ENCODE measurements at regions of chr1 and their contacts with region 1.

Region 1: GRCh38 chr1:211514030-211514754 is 22.2 kb upstream of the RD3 start:
- DNase-seq: peak; percentile 90
- H3K4me3 Mint-ChIP-seq: peak overlapping the region; percentile 23
- H3K27ac Mint-ChIP-seq: no peak overlapping the region
- H3K4me1 Mint-ChIP-seq: peaks cover 23% of the 10 kb centered on the region
- H3K27me3 Mint-ChIP-seq: no peaks in the 10 kb centered on the region

Region 2: GRCh38 chr1:210584439-210585113 is 929.6 kb before region 1 on chr1:
- CTCF ChIA-PET with region 1: interaction called, 6 read pairs
- intact Hi-C with region 1: loop called (anchors 2 kb)
- DNase-seq: peak; percentile 90
- H3K4me3 Mint-ChIP-seq: no peak overlapping the region
- H3K27ac Mint-ChIP-seq: no peak overlapping the region
- H3K4me1 Mint-ChIP-seq: peaks cover 3% of the 10 kb centered on the region
- H3K27me3 Mint-ChIP-seq: peaks cover 6% of the 10 kb centered on the region

Region 3: DNA sequence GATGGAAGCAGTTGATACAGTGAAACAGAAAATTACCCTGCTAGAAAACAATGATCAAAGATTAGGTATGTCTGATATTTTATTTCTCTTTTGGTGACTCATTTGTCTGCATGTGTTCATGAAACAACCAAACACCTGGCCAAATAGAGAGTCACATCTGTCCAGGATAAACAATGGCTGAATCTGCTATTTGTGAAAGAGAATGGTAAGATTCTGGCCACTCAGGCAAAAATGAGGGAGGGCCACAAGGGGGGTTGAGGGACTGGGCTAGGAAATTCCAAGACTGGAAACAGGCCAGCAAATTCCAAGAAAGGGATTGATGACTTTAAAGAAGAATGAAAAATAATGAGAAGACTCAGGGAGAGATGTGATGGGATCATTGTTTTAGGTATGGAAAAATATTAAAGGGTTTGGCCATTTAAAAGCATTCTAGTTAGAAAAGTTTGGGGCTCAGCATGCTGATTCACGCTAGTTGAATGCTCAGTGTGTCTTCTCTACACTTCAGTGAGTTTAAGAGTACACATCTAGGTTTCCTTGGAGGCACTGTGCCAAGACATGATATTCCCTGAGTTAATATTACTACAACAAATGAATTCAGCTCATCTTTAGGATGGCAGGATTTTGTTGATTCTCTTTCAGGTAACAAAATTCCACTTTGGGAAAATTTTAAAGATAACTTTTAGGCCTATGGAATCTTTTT is 142.6 kb before region 1 on chr1:
- CTCF ChIA-PET with region 1: no interaction called
- intact Hi-C with region 1: no loop called
- DNase-seq: no peak
- H3K4me3 Mint-ChIP-seq: no peak overlapping the region
- H3K27ac Mint-ChIP-seq: peak overlapping the region; percentile 48
- H3K4me1 Mint-ChIP-seq: peaks cover 2% of the 10 kb centered on the region
- H3K27me3 Mint-ChIP-seq: no peaks in the 10 kb centered on the region

Region 4: DNA sequence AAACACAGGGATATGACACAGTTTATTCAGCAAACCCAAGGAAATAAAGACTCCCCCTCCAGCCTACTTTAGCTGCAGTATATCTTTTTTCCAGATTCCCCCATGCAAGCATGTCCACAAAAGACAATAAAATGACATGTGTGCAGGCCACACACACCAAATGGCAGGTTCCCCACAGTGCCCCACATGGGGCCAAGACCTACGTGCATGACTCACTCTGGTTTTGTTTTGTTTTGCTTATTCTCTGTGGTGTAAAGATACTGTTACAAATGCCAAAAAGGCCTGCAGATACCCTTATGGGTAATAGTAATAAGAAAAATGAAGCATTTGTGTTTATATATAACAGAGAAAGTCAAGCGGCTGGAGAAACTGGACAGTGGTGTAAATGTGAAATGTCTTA is 93.8 kb before region 1 on chr1:
- CTCF ChIA-PET with region 1: interaction called, 4 read pairs
- intact Hi-C with region 1: loop called (anchors 1 kb)
- DNase-seq: peak; percentile 9
- H3K4me3 Mint-ChIP-seq: no peak overlapping the region
- H3K27ac Mint-ChIP-seq: no peak overlapping the region
- H3K4me1 Mint-ChIP-seq: peaks cover 16% of the 10 kb centered on the region
- H3K27me3 Mint-ChIP-seq: no peaks in the 10 kb centered on the region

Region 5: DNA sequence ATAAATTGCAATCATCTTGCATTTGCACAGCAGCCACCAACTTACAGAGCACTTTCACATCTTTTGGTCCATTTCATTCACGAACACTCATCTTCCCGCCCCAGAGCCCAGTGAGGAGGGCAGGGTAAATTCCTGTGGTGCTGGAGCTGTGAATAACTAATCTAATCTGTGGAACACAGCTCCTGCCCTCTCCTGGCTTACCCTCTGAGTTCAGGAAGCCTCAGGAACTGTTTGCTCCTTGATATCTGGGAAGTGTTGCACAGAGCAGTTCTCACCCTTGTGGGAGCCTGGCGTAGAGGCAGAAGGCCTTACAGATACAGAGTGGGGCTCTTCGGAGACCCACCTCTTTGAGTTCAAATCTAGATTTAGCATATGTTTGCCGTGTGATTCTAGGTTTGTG is 10.7 kb before region 1 on chr1:
- CTCF ChIA-PET with region 1: interaction called, 30 read pairs
- intact Hi-C with region 1: no loop called
- DNase-seq: no peak
- H3K4me3 Mint-ChIP-seq: no peak overlapping the region
- H3K27ac Mint-ChIP-seq: no peak overlapping the region
- H3K4me1 Mint-ChIP-seq: no peaks in the 10 kb centered on the region
- H3K27me3 Mint-ChIP-seq: no peaks in the 10 kb centered on the region

Region 6: DNA sequence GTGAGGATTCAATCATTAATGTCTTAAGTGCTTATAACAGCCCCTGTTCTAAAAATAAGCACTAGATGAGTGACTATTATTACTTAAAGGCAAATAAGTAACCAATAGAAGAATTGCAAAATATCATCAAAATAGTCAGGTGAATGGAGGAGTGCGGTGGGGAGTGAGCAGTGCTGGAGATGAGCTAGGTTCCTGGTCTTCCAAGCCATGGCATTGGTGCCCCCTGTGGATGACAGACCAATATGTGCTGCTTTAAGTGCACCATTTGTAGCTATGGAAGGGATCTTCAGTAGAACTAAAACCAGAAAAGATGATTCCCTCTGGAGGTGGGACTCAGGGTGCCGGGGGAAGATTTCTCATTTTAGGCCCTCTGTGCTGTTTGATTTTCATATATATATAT is 110.8 kb after region 1 on chr1:
- CTCF ChIA-PET with region 1: interaction called, 5 read pairs
- intact Hi-C with region 1: loop called (anchors 1 kb)
- DNase-seq: peak; percentile 60
- H3K4me3 Mint-ChIP-seq: no peak overlapping the region
- H3K27ac Mint-ChIP-seq: no peak overlapping the region
- H3K4me1 Mint-ChIP-seq: peaks cover 10% of the 10 kb centered on the region
- H3K27me3 Mint-ChIP-seq: no peaks in the 10 kb centered on the region

Region 7: GRCh38 chr1:211813590-211813989 is 299.4 kb after region 1 on chr1:
- CTCF ChIA-PET with region 1: no interaction called
- intact Hi-C with region 1: no loop called
- DNase-seq: no peak
- H3K4me3 Mint-ChIP-seq: no peak overlapping the region
- H3K27ac Mint-ChIP-seq: no peak overlapping the region
- H3K4me1 Mint-ChIP-seq: no peaks in the 10 kb centered on the region
- H3K27me3 Mint-ChIP-seq: no peaks in the 10 kb centered on the region

Region 8: DNA sequence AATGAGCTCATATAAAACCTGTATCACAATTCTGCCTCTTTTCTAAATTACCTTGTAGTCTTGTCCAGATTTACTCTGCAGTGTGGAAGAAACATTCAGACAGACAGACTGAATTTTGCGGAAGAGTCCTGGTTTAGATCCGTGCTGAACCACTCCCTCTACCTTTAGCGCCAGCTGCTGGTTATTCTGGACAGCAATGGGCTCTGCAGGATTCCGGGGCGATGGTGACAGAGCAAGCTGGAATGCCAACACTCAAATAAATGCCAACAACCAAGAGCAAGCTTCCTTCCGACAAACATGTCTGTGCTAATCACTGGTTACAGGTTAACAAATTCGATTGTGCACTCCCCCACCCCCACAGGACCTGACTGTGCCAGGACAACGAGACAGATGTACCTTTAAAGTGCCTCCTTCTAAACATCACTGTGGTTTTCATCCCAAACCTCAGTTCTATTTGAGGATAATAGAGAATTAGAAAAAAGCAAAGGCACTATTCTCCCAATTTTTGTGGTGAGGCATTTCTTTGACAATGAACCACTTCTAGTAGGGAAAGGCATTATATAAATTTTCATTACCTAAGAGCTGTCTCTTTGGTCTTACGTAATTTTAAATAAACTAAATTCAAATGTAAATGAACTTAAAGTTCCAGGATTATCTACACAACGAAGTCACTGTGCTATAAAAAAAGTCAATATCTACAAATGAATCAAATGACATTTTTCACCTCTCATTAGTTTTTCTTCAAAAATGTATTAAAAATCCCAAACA is 430.7 kb after region 1 on chr1:
- CTCF ChIA-PET with region 1: no interaction called
- intact Hi-C with region 1: no loop called
- DNase-seq: no peak
- H3K4me3 Mint-ChIP-seq: no peak overlapping the region
- H3K27ac Mint-ChIP-seq: no peak overlapping the region
- H3K4me1 Mint-ChIP-seq: peaks cover 7% of the 10 kb centered on the region
- H3K27me3 Mint-ChIP-seq: no peaks in the 10 kb centered on the region

Measured in activated naive CD4-positive, alpha-beta T cell treated with anti-CD3 and anti-CD28 coated beads for 36 hours (primary cell).